ENCODE measurements at regions of chr22 and their contacts with region 1.

Region 1: DNA sequence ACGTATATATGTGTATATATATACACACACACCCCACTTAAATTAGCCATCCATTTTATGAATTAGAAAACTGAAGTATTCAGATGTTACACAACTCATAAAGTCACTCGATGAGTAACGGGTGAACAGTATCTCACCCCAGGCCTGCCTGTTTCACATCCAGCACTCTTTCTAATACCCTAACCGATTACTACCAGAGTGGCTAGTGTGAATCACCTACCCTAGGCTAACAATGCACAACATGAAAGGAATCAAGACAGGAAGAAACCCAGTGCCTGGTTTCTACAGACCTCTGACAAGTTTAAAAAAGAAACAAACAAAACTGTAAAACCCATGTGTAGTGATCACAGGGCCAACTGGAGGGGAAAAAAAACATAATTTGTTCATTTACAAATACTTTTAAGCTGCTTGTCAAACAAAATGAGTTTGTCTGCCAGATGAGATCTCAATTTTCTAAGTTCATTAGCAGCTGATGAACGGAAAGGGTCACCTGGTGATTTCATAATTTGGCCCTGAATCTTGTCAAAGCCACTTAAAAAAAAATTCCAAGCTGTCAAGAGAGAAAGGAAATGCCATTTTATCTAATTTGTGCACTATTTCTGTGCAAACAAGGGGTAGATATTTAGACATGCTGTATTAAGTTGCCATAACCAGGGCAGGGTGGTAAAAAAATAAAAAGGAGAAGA is 134.8 kb downstream of the LARGE1 start:
- DNase-seq: no peak
- ATAC-seq: no peak

Region 2: DNA sequence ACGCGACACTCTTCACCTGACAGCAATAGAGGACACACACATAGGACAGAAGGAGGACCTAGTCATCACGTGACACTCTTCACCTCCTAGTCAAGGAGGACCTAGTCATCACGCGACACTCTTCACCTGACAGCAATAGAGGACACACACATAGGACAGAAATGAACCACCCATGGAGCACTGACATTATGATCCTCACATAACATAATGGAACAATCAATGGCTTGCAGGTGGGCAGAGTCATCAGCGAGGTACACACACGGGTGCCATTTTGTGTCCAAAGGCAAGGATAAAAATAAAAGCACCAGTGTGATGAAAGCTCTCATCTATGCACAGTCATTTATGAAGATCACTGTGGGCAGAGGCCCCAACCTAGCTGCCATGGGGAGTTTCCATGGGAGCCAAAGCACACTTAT is 219.8 kb before region 1 on chr22:
- intact Hi-C with region 1: loop called (anchors 1 kb)
- DNase-seq: no peak
- ATAC-seq: peak; percentile 96

Region 3: GRCh38 chr22:33726294-33726734 is 59.1 kb before region 1 on chr22:
- intact Hi-C with region 1: loop called (anchors 5 kb)
- DNase-seq: no peak
- ATAC-seq: peak; percentile 68

Region 4: GRCh38 chr22:33832558-33833151 is 47.2 kb after region 1 on chr22:
- intact Hi-C with region 1: loop called (anchors 10 kb)
- DNase-seq: peak; percentile 71
- ATAC-seq: peak; percentile 69

Region 5: GRCh38 chr22:33873186-33873585 is 87.8 kb after region 1 on chr22:
- intact Hi-C with region 1: loop called (anchors 2 kb)
- DNase-seq: no peak
- ATAC-seq: peak; percentile 84